ENCODE measurements at regions of chr2 and their contacts with region 1.

Region 1: GRCh38 chr2:136765736-136766323 is 485 bp downstream of the THSD7B start:
- DNase-seq: peak in 1 of 2 donors; percentile 7
- ATAC-seq: peak in 4 of 8 donors; percentile 8 to 46 (median 37)
- H3K4me3 ChIP-seq: peak overlapping the region; percentile 40 to 63 (median 50)
- H3K27ac ChIP-seq: no peak overlapping the region
- H3K4me1 ChIP-seq: peaks cover 0 to 25% (median 8%) of the 10 kb centered on the region in 9 donors
- H3K27me3 ChIP-seq: peaks cover 16 to 73% (median 52%) of the 10 kb centered on the region in 7 donors
- CTCF ChIP-seq: no peak

Region 2: DNA sequence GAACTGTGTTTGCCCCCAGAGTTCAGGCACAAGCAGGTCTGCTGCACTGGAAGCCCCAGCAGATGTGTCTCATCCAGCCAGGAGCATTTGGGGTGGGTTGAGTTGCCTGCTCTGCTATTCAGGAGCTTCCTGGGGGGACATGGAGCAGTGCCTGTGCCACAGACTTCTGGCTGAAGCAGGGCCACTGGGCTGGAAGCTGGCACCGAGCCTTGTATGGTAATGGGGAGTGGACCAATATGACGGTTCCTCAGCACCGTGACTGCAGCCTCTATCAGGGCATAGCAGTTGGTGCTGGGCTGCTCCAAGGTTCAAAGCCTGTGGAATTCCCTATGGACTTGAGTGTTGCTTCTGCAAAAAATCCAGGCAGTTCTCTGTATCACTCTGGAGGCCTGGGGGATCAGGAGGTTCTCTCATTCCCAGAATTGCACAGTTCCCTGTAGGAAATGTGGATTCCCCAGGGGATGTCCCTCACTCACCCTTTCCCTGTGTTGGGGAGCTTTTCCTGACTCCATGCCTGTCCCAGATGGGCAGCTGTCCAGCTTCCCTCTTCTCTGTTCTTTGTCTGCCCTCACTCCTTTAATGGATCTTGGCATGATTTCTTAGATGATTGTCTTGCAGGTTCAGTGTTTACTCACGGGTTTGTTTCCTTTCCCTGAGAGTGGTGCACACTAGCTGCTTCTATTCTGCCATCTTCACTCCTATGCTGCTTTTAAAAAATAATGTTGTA is 37.7 kb before region 1 on chr2:
- intact Hi-C with region 1: loop called in 1 of 10 experiments (anchors 2 kb)
- DNase-seq: no peak
- ATAC-seq: no peak
- H3K4me3 ChIP-seq: no peak overlapping the region
- H3K27ac ChIP-seq: no peak overlapping the region
- H3K4me1 ChIP-seq: no peaks in the 10 kb centered on the region
- H3K27me3 ChIP-seq: no peaks in the 10 kb centered on the region
- CTCF ChIP-seq: no peak

Region 3: GRCh38 chr2:136777391-136777790 is 11.6 kb after region 1 on chr2:
- intact Hi-C with region 1: loop called in 1 of 10 experiments (anchors 1 kb)
- DNase-seq: no peak
- ATAC-seq: no peak
- H3K4me3 ChIP-seq: no peak overlapping the region
- H3K27ac ChIP-seq: no peak overlapping the region
- H3K4me1 ChIP-seq: no peaks in the 10 kb centered on the region
- H3K27me3 ChIP-seq: peaks cover 0 to 6% (median 0%) of the 10 kb centered on the region in 7 donors
- CTCF ChIP-seq: no peak